Activated CD4-positive, alpha-beta T cell treated with anti-CD3 and anti-CD28 coated beads, Interleukin-2, amount 10 ng/mL, durations not matched to agents 24 days and 14 days (primary cell): ENCODE measurements at regions of chr2 and their contacts with region 1.

Region 1: DNA sequence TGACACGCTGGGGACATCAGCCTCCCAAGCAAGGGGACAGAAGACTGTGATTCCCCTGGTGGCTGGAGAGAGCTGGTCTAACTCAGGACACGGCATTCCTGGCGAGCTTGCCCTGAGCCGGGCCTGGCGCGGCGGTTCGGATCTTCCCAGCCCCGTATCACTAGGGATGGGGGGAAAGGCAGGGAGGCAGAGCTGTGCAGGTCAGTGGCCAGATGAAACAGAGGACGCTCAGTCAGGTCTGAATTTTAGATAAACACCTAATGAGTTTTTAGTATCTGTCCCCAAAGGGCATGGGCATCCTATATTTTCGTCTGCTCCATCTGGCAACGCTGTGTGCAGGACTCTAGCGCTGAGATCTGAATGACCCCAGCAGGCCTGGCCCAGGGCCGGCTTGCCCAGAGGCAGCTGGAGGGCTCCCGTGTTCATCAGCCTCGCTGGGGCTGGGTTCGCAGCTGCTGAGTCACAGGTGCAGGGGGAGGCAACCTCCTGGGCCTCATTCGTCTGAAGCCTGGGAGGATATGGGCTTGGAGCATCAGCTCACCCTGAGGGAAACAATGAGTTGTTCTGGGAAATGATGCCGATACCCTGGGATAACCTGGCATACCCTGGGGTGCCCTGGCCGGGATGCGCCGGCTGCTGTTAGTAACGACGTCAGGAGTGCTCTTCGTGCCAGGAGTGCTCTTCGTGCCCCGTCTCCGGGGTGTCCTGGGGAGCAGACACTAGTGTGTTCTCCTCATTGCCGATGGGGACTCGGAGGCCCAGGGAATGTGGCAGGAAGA is 48.1 kb upstream of the HPCAL1 start:
- DNase-seq: no peak
- H3K4me3 Mint-ChIP-seq: no peak overlapping the region
- H3K27ac Mint-ChIP-seq: no peak overlapping the region
- H3K4me1 Mint-ChIP-seq: no peaks in the 10 kb centered on the region
- H3K27me3 Mint-ChIP-seq: peaks cover 21% of the 10 kb centered on the region

Region 2: DNA sequence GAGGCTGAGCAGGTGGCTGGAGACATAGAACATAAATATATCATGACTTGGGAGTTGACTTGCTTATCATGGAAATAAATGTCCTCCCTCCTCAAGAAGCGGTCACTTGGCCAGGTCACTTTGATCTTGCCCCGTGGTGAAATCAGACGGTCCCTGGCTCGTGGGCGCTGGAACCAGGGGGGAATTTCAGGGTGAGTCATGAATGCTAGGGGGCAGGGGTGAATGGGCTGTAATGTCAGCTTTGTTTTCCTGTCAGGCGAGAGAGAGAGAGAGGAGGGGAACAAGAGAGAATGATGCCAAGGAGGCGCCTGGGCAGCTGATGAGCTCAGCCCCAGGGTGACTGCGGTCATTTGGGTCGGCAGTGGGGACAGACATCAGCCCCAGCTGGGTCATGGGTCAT is 84.3 kb before region 1 on chr2:
- intact Hi-C with region 1: loop called (anchors 10 kb)
- DNase-seq: no peak
- H3K4me3 Mint-ChIP-seq: no peak overlapping the region
- H3K27ac Mint-ChIP-seq: no peak overlapping the region
- H3K4me1 Mint-ChIP-seq: no peaks in the 10 kb centered on the region
- H3K27me3 Mint-ChIP-seq: no peaks in the 10 kb centered on the region